RWPE1 (cell line): ENCODE measurements at regions of chrX and their contacts with region 1.

Region 1: DNA sequence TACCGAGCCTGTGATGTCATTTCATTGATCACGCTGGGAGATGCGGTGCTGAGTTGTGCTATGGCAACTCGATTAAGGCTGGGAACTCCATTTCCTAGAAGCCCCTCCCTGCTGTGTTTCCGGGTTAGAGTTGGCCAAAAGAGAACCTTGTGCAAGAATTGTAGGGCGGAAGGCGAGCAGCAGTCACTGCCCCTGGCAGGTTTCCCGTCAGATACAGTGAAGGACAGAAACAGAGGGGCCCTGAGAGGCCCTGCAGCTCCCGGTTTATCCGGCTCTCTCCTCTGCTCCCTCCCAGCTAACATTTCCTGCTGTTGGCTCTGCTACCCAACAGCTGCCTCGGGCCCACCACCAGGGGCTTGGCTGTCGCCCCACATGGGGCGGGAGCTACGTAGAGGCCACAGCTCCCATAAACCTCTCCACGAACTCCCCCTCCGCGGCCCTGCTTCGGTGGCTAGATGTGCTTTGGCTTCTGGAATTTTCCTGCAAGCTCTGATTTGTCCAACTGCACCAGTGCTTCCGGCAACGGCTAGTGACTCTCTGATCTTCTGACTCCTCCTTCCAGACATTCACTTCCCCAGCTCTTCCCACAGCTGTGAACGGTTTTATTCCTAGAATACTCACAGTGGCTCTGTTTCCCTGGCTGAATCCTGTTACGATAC is 74.9 kb upstream of the USP9X start:
- DNase-seq: peak; percentile 56
- H3K27ac ChIP-seq: peak overlapping the region; percentile 97
- CTCF ChIP-seq: no peak

Region 2: DNA sequence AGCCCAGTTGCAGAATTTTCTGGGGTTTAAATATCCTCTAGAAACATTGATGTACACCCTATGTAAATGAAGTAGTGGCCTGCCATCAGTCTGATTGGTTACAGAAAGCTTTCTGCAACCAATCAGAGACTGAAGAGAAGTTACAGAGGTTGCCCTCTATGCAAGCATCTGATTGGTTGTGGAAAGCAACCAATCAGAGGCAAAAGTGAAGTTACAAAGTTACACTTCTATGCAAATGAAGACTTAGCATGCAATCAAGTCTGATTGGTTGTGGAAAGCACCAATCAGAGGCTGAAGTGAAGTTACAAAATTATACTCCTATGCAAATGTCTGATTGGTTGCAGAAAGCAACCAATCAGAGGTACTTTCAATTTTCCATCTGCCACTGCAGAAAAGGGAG is 23.0 kb after region 1 on chrX:
- CTCF ChIA-PET with region 1: no interaction called
- POLR2A ChIA-PET with region 1: no interaction called
- DNase-seq: no peak
- H3K27ac ChIP-seq: no peak overlapping the region
- CTCF ChIP-seq: no peak

Region 3: GRCh38 chrX:41084044-41084892 is 74.0 kb after region 1 on chrX:
- CTCF ChIA-PET with region 1: no interaction called
- POLR2A ChIA-PET with region 1: interaction called, 14 read pairs
- DNase-seq: peak; percentile 77
- H3K27ac ChIP-seq: peak overlapping the region; percentile 96
- CTCF ChIP-seq: no peak